H1 (cell line): ENCODE measurements at regions of chr9 and their contacts with region 1.

Region 1: GRCh38 chr9:70602321-70603019 is 188.0 kb upstream of the KLF9 start:
- DNase-seq: peak; percentile 19 to 58
- H3K4me3 ChIP-seq: no peak overlapping the region
- H3K27ac ChIP-seq: no peak overlapping the region
- H3K4me1 ChIP-seq: peaks cover 0 to 9% (median 5%) of the 10 kb centered on the region in 4 experiments; a peak in 5 of 7 replicates
- H3K27me3 ChIP-seq: no peaks in the 10 kb centered on the region
- CTCF ChIP-seq: peak in 2 of 3 experiments; percentile 81 to 83; a peak in 3 of 4 replicates
- EP300 ChIP-seq: no peak
- POLR2A ChIP-seq: no peak
- RAD21 ChIP-seq: peak; percentile 98 to 99

Region 2: GRCh38 chr9:70340572-70340971 is 261.9 kb before region 1 on chr9:
- CTCF ChIA-PET with region 1: interaction called, 15 read pairs
- POLR2A ChIA-PET with region 1: no interaction called
- DNase-seq: no peak
- H3K4me3 ChIP-seq: no peak overlapping the region
- H3K27ac ChIP-seq: no peak overlapping the region
- H3K4me1 ChIP-seq: no peaks in the 10 kb centered on the region
- H3K27me3 ChIP-seq: no peaks in the 10 kb centered on the region
- CTCF ChIP-seq: peak in 1 of 3 experiments; percentile 12; a peak in 1 of 4 replicates
- EP300 ChIP-seq: no peak
- POLR2A ChIP-seq: no peak
- RAD21 ChIP-seq: peak in 1 of 2 experiments; percentile 39; a peak in 3 of 4 replicates

Region 3: DNA sequence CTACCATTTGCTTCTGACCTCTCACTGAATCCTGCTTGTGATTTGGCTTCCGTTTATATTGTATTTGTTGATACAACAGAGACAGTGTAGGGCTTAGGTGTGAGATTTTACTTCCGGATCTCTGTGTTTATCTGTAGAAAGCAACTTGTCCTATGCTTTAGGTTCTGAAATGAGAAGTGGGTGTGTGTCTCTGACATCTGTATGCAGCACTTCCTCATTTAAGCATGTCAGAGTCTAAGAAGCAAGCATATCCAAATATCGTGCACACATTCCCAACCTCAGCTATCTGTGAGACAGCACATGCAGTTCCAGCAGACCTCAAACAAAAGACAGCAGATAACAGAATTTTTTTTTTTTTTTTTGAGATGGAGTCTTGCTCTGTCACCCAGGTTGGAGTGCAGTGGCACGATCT is 204.3 kb before region 1 on chr9:
- CTCF ChIA-PET with region 1: interaction called, 10 read pairs
- POLR2A ChIA-PET with region 1: no interaction called
- DNase-seq: no peak
- H3K4me3 ChIP-seq: no peak overlapping the region
- H3K27ac ChIP-seq: no peak overlapping the region
- H3K4me1 ChIP-seq: no peaks in the 10 kb centered on the region
- H3K27me3 ChIP-seq: 0 out of 7 replicates have a peak, but pooled peaks cover 0 to 3% (median 0%) of the 10 kb centered on the region in 4 experiments
- CTCF ChIP-seq: no peak
- EP300 ChIP-seq: no peak
- POLR2A ChIP-seq: no peak
- RAD21 ChIP-seq: no peak

Region 4: DNA sequence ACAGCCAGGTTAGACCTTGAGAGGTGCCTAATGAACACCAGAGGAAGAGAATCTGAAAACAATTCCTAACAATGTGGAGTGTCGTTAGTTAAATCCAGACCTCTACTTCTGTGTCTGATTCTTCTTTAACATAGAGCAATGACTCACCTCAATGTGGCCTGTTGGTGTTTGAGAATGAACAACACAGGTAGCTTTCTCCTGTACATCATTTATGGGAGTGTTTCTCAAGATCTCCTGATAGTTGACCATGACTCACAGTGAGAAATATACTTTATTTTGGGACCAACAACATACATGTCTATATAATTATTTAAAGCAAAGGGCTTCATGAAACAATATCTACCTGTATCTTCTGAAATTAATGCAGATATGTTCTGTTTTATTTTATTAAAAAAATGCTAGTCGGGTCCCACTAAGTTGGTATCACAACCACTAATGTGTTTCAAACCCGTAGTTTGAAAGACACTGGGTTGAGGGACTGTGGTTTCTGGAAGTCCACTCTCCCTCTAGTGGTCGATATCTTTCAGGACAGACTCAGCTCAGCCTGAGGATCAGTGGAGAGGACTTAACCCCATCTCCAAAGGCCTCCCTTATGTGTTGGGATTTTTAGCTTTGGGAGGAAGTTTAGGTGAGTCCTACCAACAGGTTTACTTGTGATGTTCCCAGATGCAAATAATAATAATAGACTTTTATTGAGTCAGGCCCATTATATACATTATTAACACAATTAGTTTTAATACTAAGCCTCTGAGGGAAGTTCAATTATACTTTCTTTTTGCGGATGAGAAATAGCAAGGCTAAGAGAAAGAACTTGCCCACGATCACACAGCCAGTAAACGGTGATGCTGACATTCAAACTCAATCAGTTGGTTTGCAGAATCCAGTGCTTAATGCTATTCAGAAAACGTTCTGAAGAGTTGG is 118.0 kb before region 1 on chr9:
- CTCF ChIA-PET with region 1: interaction called, 13 read pairs
- POLR2A ChIA-PET with region 1: no interaction called
- DNase-seq: peak in 1 of 2 experiments; percentile 5
- H3K4me3 ChIP-seq: no peak overlapping the region
- H3K27ac ChIP-seq: no peak overlapping the region
- H3K4me1 ChIP-seq: peaks cover 2 to 14% (median 8%) of the 10 kb centered on the region in 4 experiments
- H3K27me3 ChIP-seq: no peaks in the 10 kb centered on the region
- CTCF ChIP-seq: peak; percentile 42 to 84 (median 70)
- EP300 ChIP-seq: no peak
- POLR2A ChIP-seq: no peak
- RAD21 ChIP-seq: peak; percentile 73 to 83

Region 5: GRCh38 chr9:70614786-70615463 is 12.5 kb after region 1 on chr9:
- CTCF ChIA-PET with region 1: interaction called, 14 read pairs
- POLR2A ChIA-PET with region 1: no interaction called
- DNase-seq: no peak
- H3K4me3 ChIP-seq: no peak overlapping the region
- H3K27ac ChIP-seq: no peak overlapping the region
- H3K4me1 ChIP-seq: no peaks in the 10 kb centered on the region
- H3K27me3 ChIP-seq: no peaks in the 10 kb centered on the region; a peak in 1 of 7 replicates
- CTCF ChIP-seq: no peak
- EP300 ChIP-seq: no peak
- POLR2A ChIP-seq: no peak
- RAD21 ChIP-seq: no peak

Region 6: DNA sequence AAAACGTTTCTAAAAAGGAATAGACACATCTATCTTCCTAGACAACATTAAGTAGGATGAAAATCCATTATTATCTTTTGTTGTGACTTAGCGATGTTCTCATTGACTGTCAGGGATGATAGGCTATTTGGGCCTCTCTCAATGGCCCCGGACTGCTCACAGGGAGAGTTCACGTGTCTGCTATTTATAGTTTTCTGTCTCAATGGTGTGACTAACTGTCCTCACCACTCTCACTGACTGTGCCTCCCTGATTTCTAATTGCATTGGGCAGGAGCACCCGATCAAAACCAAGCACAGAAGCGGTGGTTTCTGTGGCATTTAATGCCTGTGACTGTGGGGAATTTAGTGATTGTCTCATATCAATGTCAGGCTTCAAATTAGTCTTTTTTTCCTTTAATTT is 98.7 kb after region 1 on chr9:
- CTCF ChIA-PET with region 1: no interaction called
- POLR2A ChIA-PET with region 1: no interaction called
- DNase-seq: no peak
- H3K4me3 ChIP-seq: no peak overlapping the region
- H3K27ac ChIP-seq: no peak overlapping the region
- H3K4me1 ChIP-seq: peaks cover 0 to 4% (median 0%) of the 10 kb centered on the region in 4 experiments; a peak in 1 of 7 replicates
- H3K27me3 ChIP-seq: no peaks in the 10 kb centered on the region
- CTCF ChIP-seq: no peak
- EP300 ChIP-seq: no peak
- POLR2A ChIP-seq: no peak
- RAD21 ChIP-seq: no peak